Adrenal gland (tissue), 19 donors: ENCODE measurements at regions of chr18 and their contacts with region 1.

Region 1: DNA sequence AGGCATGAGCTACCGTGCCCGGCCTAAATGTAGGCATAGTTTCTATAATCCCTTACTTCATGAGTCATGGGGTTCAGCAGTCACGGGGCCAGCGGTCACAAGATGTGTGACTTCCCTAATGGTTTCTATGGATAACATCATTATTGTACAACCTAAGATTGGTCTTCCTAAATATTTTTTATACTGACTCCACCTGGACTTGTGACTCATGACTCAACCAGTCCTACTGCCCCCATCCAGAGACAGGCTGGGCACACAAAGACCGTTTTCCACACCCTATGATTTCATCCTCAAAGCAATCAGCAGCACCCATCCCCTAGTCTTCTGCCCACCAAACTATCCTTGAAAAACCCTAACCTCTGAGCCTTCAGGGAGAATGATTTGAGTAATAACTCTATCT is 15.9 kb downstream of the FAM210A start:
- DNase-seq: no peak
- H3K4me3 ChIP-seq: no peak overlapping the region
- H3K27ac ChIP-seq: no peak overlapping the region
- H3K4me1 ChIP-seq: peaks cover 6 to 10% of the 10 kb centered on the region in 2 donors
- H3K27me3 ChIP-seq: no peaks in the 10 kb centered on the region
- CTCF ChIP-seq: no peak
- POLR2A ChIP-seq: no peak

Region 2: DNA sequence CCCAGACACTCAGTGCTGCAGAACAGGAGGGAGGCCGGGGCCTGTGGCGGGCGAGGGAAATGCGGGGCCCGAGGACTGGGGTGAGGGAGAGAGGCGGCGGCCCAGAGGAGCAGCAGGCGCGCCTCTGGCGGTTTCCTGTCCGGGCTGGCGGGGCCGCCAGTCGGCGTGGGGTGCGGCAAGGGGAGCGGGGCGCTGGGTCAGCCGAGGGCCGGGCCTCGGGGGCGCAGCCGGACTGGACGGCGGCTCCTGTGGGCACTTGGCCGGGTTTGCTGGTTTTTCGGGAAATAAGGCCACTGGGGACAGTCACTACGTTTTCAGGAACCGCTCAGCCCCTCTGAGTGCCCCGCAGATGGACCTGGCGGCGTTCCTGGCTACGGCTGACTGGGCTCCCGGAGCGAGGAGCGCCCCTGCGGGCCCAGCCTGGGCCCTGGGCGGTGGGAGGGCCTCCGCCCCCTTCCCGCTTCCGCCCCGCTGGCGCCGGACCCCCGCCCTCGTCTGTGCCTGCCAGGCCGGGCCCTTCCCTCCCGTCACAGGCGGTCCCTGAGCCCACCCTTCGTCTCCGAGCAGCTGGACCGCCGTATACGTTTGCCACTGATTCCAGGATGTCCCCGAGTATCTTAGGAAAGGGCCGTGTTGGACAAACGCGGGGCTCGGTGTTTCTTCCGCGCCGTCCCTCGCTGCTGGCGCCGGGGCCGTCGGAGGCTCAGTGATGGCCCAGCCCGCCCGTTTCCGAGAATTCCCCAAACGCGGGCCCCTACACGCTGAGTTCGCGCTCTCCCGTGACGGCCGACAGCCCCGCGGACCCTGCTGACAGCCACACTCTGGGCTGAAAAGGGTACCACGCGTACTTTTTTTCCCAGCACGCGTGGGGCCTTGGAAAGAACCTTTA is 68.7 kb before region 1 on chr18:
- intact Hi-C with region 1: loop called in 1 of 2 experiments (anchors 10 kb)
- DNase-seq: peak in 4 of 7 donors; percentile 26 to 60 (median 40)
- H3K4me3 ChIP-seq: peak overlapping the region in 1 of 4 donors; percentile 41
- H3K27ac ChIP-seq: peak overlapping the region in 4 of 5 donors; percentile 2 to 76 (median 39)
- H3K4me1 ChIP-seq: no peaks in the 10 kb centered on the region
- H3K27me3 ChIP-seq: no peaks in the 10 kb centered on the region
- CTCF ChIP-seq: no peak
- POLR2A ChIP-seq: no peak